ENCODE measurements at regions of chr11 and their contacts with region 1.

Region 1: DNA sequence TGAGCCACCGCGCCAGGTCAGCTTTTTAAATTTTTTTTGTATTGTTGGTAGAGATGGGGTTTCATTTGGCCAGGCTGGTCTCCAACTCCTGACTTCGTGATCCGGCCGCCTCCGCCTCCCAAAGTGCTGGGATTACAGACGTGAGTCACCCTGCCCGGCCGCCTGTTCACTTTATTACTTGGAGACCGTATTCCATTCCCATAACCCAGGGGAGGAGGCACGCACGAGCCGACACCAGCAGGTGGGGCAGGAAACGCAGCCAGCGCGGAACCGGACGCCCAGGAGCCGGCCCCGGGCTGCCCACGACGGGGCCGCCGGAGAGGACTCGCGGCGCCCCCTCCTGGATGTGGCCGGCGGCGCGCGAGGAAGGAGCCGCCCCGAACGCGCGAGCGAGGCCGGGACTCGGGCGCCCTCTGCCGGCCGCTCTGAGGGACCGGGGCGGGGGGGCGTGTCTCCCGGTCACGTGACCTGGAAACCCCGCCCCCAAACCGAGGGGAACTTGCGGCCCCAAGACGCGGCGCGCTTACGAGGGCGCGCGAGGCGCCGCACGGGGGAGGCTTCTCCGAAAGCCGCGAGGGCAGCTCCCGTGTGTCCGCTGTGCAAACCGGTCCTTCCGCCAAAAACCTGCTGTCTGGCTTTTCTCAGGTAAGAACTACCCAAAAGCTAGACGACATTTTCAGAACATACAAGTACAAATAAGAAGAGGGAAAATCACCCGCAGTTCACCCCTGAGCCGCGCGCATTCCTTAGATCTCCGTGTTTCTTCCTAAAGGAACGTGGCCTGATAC is 11.6 kb upstream of the RNH1 start:
- DNase-seq: peak; percentile 93
- H3K4me3 Mint-ChIP-seq: peak overlapping the region; percentile 30
- H3K27ac Mint-ChIP-seq: peak overlapping the region; percentile 31
- H3K4me1 Mint-ChIP-seq: no peaks in the 10 kb centered on the region
- H3K27me3 Mint-ChIP-seq: no peaks in the 10 kb centered on the region
- CTCF ChIP-seq: peak; percentile 94

Region 2: GRCh38 chr11:207208-207862 is 311.3 kb before region 1 on chr11 and contains the starts of genes BET1L and RIC8A:
- CTCF ChIA-PET with region 1: no interaction called
- intact Hi-C with region 1: loop called (anchors 10 kb)
- DNase-seq: peak; percentile 95
- H3K4me3 Mint-ChIP-seq: peak within 1 kb of the TSS; percentile 96
- H3K27ac Mint-ChIP-seq: peak within 1 kb of the TSS; percentile 92
- H3K4me1 Mint-ChIP-seq: no peaks in the 10 kb centered on the region
- H3K27me3 Mint-ChIP-seq: no peaks in the 10 kb centered on the region
- CTCF ChIP-seq: no peak
- total RNA-seq, gene BET1L: 47.8 and 59.0 TPM in 2 replicates
- total RNA-seq, gene RIC8A: 73.0 and 84.1 TPM in 2 replicates

Region 3: GRCh38 chr11:355581-356458 is 162.8 kb before region 1 on chr11:
- CTCF ChIA-PET with region 1: no interaction called
- intact Hi-C with region 1: loop called (anchors 5 kb)
- DNase-seq: peak; percentile 84
- H3K4me3 Mint-ChIP-seq: peak overlapping the region; percentile 12
- H3K27ac Mint-ChIP-seq: no peak overlapping the region
- H3K4me1 Mint-ChIP-seq: peaks cover 20% of the 10 kb centered on the region
- H3K27me3 Mint-ChIP-seq: peaks cover 21% of the 10 kb centered on the region
- CTCF ChIP-seq: no peak

Region 4: DNA sequence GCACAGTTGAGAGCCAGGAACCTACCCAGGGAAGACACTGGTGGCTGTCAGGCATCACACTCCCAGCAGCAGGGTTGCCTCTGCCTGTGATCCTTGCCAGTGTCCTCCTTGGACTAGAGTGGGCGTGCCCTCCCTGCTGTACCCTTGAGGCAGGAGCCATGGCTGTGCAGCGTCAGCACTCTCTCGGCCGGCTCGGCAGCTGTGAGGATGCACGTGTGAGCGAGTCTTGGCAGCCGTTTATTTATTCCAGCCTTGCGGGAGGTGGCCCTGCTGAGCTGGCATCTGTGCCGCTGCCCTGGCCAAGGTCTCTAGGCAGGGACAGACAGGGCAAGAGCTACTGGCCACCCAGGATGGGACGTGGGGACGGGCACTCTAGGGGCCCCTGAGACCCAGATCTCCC is 357.9 kb after region 1 on chr11:
- CTCF ChIA-PET with region 1: no interaction called
- intact Hi-C with region 1: no loop called
- DNase-seq: no peak
- H3K4me3 Mint-ChIP-seq: no peak overlapping the region
- H3K27ac Mint-ChIP-seq: no peak overlapping the region
- H3K4me1 Mint-ChIP-seq: no peaks in the 10 kb centered on the region
- H3K27me3 Mint-ChIP-seq: no peaks in the 10 kb centered on the region
- CTCF ChIP-seq: no peak